CD8-positive, alpha-beta T cell (primary cell): ENCODE measurements at regions of chr2 and their contacts with region 1.

Region 1: DNA sequence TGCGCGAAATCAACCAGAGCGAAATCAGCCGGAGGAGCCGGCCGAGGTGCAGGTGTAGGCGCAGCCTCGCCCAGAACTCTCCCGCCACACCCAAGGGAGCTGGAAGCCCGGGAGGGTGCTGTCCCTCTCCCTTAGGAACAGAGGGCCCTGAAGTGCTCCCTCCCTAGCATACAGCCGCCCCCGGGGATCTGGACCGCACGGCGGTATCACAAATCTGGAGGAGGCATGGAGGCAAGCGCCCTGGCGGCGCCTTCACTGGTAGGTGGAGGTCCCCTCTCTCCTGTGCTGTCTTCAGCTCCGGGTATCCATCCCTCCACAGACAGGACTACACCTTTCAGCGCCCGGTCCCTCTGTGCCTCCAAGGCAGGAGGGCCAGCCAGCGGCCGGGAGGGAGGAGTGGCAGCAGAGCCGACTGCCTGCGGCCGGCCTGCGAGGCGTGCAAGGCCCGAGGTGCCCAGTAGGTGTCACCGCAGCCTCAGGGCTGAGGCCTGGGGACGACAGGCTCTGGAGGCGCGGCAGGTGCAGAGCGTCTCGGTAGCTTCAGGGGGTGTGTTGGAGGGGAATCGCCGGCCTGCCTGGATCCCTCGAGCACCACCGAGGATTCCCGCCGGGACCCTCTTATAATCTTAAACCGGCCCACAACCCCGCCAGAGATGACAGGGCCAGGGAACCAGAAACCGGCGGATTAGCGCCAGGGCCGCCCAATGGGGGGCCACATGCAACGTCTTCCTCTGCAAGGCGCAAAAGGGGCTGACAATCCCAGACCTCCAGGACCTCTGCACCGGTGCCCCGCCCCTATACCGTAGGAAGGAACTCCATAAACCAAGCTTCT is 2.8 kb downstream of the IHH start:
- DNase-seq: peak; percentile 62 to 85 (median 74)
- ATAC-seq: peak; percentile 96
- H3K4me3 ChIP-seq: no peak overlapping the region
- H3K4me3 Mint-ChIP-seq: peak overlapping the region; percentile 55
- H3K27ac ChIP-seq: no peak overlapping the region
- H3K27ac Mint-ChIP-seq: no peak overlapping the region
- H3K4me1 ChIP-seq: peaks cover 35% of the 10 kb centered on the region
- H3K4me1 Mint-ChIP-seq: peaks cover 26% of the 10 kb centered on the region
- H3K27me3 ChIP-seq: peaks cover 26 to 37% of the 10 kb centered on the region in 2 experiments
- H3K27me3 Mint-ChIP-seq: peaks cover 58% of the 10 kb centered on the region
- CTCF ChIP-seq: peak; percentile 92

Region 2: GRCh38 chr2:219041252-219041651 is 16.7 kb before region 1 on chr2 and contains the start of gene CFAP65:
- CTCF ChIA-PET with region 1: interaction called, 10 read pairs
- POLR2A ChIA-PET with region 1: no interaction called
- intact Hi-C with region 1: no loop called
- DNase-seq: peak in 1 of 9 experiments; percentile 48
- ATAC-seq: peak; percentile 63
- H3K4me3 ChIP-seq: no peak within 1 kb of the TSS
- H3K4me3 Mint-ChIP-seq: peak within 1 kb of the TSS; percentile 72
- H3K27ac ChIP-seq: no peak within 1 kb of the TSS
- H3K27ac Mint-ChIP-seq: no peak within 1 kb of the TSS
- H3K4me1 ChIP-seq: peaks cover 3% of the 10 kb centered on the region
- H3K4me1 Mint-ChIP-seq: peaks cover 8% of the 10 kb centered on the region
- H3K27me3 ChIP-seq: peaks cover 7 to 27% of the 10 kb centered on the region in 2 experiments
- H3K27me3 Mint-ChIP-seq: peaks cover 65% of the 10 kb centered on the region
- CTCF ChIP-seq: no peak
- total RNA-seq, gene CFAP65: not detected

Region 3: DNA sequence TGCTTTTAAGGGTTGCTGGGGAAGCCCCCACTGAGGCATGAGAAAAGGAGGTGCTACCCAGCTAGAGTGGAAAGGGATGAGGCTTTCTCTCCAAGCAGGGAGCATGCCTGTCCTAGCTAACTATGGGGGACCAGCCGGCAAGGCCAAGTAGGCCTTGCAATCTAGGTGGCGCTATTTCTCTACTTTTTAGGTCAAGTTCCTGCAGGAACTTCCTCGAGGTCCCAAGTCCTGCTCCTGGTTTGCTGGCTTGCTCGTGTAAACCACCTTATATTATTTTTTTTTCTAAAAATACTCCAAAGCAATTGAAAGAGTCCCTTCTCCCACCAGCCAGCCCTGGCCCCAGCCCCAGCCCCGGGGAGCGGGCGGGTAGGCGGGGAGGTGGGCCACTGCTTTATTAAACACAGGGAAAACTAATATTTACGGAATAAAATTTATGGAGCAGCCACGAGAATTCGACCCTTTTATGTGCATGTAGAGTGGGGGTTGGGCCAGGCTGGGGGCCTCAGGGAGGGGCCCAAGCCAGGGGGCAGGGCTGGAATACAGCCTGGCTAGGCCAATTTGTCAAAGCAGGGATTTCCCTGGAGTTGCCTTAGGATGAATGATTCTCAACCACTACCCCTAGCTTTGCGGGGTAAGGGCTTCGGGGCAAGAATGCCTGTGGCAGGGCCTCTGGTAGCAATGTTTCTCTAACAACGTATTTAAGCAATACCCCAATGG is 15.6 kb after region 1 on chr2:
- CTCF ChIA-PET with region 1: interaction called, 35 read pairs
- POLR2A ChIA-PET with region 1: interaction called, 3 read pairs
- intact Hi-C with region 1: no loop called
- DNase-seq: peak in 3 of 9 experiments; percentile 9 to 49 (median 30)
- ATAC-seq: no peak
- H3K4me3 ChIP-seq: no peak overlapping the region
- H3K4me3 Mint-ChIP-seq: no peak overlapping the region
- H3K27ac ChIP-seq: no peak overlapping the region
- H3K27ac Mint-ChIP-seq: no peak overlapping the region
- H3K4me1 ChIP-seq: no peaks in the 10 kb centered on the region
- H3K4me1 Mint-ChIP-seq: no peaks in the 10 kb centered on the region
- H3K27me3 ChIP-seq: no peaks in the 10 kb centered on the region
- H3K27me3 Mint-ChIP-seq: no peaks in the 10 kb centered on the region
- CTCF ChIP-seq: no peak